ENCODE measurements at regions of chr10 and their contacts with region 1.

Region 1: DNA sequence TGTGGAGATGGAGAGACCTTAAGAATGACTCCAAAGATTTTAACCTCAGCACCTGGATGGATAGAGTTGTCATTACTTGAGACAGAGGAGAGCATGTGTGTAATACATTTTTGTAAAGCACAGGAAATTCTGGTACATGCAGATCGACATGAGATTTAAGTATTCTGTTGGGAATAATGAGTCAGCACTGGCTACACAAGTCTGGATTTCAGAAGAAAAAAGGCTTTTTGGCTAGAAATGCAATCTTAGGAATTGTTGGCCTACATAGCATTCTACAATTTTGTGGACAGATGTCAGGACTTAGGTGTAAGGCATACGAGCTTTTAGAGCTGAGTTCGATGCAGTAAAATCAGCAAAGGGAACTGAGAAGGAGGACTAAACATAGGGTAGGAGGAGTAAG is 24.1 kb upstream of the ANKRD30A start:
- DNase-seq: no peak
- ATAC-seq: no peak
- H3K4me3 ChIP-seq: no peak overlapping the region
- H3K27ac ChIP-seq: no peak overlapping the region
- H3K4me1 ChIP-seq: no peaks in the 10 kb centered on the region
- H3K27me3 ChIP-seq: no peaks in the 10 kb centered on the region
- CTCF ChIP-seq: no peak
- POLR2A ChIP-seq: no peak

Region 2: DNA sequence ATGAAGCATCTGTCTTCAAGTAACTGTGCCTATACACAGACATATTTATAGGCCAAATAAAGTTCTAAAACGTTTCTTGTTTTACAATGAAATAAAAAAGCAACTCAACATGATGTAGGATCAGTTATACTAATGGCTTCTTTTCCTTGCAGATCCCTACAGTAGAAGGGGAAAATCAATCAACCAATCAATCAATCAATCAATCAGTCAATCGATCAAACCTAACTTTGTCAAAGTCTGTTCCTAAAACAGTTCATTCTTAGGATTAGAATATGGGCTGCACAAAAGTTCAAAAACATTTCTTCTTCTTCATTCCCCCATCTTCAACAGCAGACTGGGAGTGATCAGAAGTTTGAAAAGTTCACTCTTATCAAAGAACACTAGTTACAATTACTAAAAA is 123.8 kb before region 1 on chr10:
- intact Hi-C with region 1: no loop called
- DNase-seq: no peak
- ATAC-seq: no peak
- H3K4me3 ChIP-seq: no peak overlapping the region
- H3K27ac ChIP-seq: no peak overlapping the region
- H3K4me1 ChIP-seq: no peaks in the 10 kb centered on the region
- H3K27me3 ChIP-seq: peaks cover 0 to 5% (median 0%) of the 10 kb centered on the region in 9 donors
- CTCF ChIP-seq: no peak
- POLR2A ChIP-seq: no peak

Region 3: DNA sequence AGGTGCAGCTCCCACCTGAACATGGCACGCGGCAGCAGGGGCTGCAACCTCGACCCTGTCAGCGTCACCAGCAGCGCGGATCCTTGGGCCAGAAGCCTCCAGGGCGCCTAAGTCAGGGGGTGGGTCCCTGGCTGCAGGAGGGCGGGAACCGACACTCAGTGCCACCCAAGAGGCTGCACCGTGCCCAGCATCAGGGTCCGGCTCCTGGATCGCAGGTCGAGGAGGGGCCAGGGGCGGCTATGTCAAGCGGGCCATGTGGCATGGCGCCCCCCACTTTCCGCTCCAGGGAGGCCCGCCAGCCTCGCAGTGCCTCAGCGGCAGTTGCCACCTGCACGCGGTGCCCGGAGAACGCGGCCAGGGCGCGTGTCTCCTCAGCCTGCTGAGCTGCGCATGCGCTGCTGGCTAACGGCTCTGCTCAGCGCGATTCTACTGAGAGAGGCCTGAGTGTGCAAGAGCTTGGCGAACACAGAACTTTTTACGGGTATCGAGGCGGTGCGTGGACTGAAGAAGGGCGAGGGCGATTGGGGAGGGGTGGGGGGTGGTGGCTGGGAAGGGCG is 24.0 kb after region 1 on chr10 and contains the start of gene ANKRD30A:
- intact Hi-C with region 1: loop called in 1 of 10 experiments (anchors 2 kb)
- DNase-seq: peak in 1 of 5 donors; percentile 64
- ATAC-seq: no peak
- H3K4me3 ChIP-seq: no peak within 1 kb of the TSS
- H3K27ac ChIP-seq: no peak within 1 kb of the TSS
- H3K4me1 ChIP-seq: no peaks in the 10 kb centered on the region
- H3K27me3 ChIP-seq: peaks cover 0 to 5% (median 0%) of the 10 kb centered on the region in 9 donors
- CTCF ChIP-seq: no peak
- POLR2A ChIP-seq: no peak
- total RNA-seq, gene ANKRD30A: not detected